Panc1 (cell line): ENCODE measurements at regions of chr1 and their contacts with region 1.

Region 1: DNA sequence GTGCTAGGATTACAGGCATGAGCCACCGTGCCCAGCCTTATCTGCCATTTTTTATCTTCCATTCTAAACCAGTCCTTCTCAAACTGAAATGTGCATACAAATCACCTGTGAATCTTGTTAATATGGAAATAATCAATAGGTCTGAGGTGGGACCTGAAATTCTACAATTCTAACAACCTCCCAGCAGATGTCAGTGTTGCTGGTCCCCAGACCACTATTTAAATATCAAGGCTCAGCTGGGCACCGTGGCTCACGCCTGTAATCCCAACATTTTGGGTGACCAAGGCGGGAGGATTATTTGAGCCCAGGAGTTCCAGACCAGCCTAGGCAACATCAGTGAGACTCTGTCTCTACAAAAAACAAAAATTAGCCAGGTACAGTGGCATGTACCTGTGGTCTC is 4.1 kb downstream of the UQCRHL start:
- DNase-seq: no peak
- ATAC-seq: no peak
- H3K4me3 ChIP-seq: no peak overlapping the region
- H3K27ac ChIP-seq: peak overlapping the region; percentile 99
- H3K4me1 ChIP-seq: peaks cover 50% of the 10 kb centered on the region
- H3K27me3 ChIP-seq: no peaks in the 10 kb centered on the region
- CTCF ChIP-seq: no peak

Region 2: GRCh38 chr1:15749399-15750291 is 53.7 kb before region 1 on chr1:
- CTCF ChIA-PET with region 1: no interaction called
- POLR2A ChIA-PET with region 1: no interaction called
- in situ Hi-C with region 1: no loop called
- intact Hi-C with region 1: no loop called
- DNase-seq: no peak
- ATAC-seq: no peak
- H3K4me3 ChIP-seq: no peak overlapping the region
- H3K27ac ChIP-seq: peak overlapping the region; percentile 3; the same call in 1 of the 2 replicates
- H3K4me1 ChIP-seq: peaks cover 15% of the 10 kb centered on the region
- H3K27me3 ChIP-seq: no peaks in the 10 kb centered on the region
- CTCF ChIP-seq: no peak

Region 3: DNA sequence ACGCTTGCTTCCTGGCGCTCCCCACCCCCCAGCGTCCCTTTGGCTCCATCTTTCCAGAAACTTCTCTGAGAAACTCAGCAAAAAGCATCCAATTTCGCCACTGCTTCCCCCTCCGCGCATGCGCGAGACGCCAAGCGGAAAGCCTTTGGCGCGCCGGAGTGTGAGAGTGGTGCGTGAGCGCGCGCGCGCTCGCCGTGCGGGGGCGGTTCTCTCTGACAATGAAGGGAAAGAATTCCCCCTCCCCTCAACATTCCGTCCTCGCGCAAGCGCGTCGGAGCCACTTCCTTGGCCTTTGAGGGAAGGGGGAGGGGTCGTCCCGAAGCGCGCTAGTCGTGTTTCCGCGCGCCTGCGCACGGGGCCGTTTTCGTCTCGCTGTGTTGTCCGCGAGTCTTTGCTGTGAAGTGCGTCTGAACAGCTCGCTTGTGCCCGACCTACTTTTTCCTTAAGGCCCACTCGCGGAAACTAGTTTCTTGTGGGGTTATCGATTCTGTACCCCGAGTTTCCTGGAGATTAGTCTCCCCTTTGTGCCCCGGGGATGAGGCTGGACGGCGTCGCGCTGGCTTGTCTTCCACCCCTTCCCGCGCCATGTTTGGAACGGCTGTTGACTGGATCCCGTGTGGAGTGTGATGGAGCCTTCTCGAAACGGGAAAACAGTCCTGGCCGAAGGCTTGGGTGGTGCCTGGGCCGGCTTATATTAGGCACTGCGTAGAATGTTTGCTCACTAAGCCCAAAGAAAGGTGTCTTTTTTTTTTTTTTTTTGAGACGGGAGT is 32.6 kb after region 1 on chr1:
- CTCF ChIA-PET with region 1: interaction called, 8 read pairs
- POLR2A ChIA-PET with region 1: interaction called, 23 read pairs
- in situ Hi-C with region 1: no loop called
- intact Hi-C with region 1: no loop called
- DNase-seq: peak; percentile 98
- ATAC-seq: peak; percentile 73
- H3K4me3 ChIP-seq: peak overlapping the region; percentile 65 to 91
- H3K27ac ChIP-seq: peak overlapping the region; percentile 95
- H3K4me1 ChIP-seq: peaks cover 24% of the 10 kb centered on the region
- H3K27me3 ChIP-seq: no peaks in the 10 kb centered on the region
- CTCF ChIP-seq: no peak

Region 4: GRCh38 chr1:15885701-15886610 is 82.6 kb after region 1 on chr1:
- CTCF ChIA-PET with region 1: interaction called, 12 read pairs
- POLR2A ChIA-PET with region 1: interaction called, 8 read pairs
- in situ Hi-C with region 1: no loop called
- intact Hi-C with region 1: no loop called
- DNase-seq: peak; percentile 55
- ATAC-seq: peak; percentile 96
- H3K4me3 ChIP-seq: peak overlapping the region; percentile 21 to 57
- H3K27ac ChIP-seq: peak overlapping the region; percentile 64
- H3K4me1 ChIP-seq: peaks cover 32% of the 10 kb centered on the region
- H3K27me3 ChIP-seq: no peaks in the 10 kb centered on the region
- CTCF ChIP-seq: no peak

Region 5: GRCh38 chr1:15918962-15919715 is 115.8 kb after region 1 on chr1:
- CTCF ChIA-PET with region 1: no interaction called
- POLR2A ChIA-PET with region 1: no interaction called
- in situ Hi-C with region 1: no loop called
- intact Hi-C with region 1: loop called (anchors 10 kb)
- DNase-seq: no peak
- ATAC-seq: no peak
- H3K4me3 ChIP-seq: no peak overlapping the region
- H3K27ac ChIP-seq: no peak overlapping the region
- H3K4me1 ChIP-seq: no peaks in the 10 kb centered on the region
- H3K27me3 ChIP-seq: no peaks in the 10 kb centered on the region
- CTCF ChIP-seq: no peak

Region 6: DNA sequence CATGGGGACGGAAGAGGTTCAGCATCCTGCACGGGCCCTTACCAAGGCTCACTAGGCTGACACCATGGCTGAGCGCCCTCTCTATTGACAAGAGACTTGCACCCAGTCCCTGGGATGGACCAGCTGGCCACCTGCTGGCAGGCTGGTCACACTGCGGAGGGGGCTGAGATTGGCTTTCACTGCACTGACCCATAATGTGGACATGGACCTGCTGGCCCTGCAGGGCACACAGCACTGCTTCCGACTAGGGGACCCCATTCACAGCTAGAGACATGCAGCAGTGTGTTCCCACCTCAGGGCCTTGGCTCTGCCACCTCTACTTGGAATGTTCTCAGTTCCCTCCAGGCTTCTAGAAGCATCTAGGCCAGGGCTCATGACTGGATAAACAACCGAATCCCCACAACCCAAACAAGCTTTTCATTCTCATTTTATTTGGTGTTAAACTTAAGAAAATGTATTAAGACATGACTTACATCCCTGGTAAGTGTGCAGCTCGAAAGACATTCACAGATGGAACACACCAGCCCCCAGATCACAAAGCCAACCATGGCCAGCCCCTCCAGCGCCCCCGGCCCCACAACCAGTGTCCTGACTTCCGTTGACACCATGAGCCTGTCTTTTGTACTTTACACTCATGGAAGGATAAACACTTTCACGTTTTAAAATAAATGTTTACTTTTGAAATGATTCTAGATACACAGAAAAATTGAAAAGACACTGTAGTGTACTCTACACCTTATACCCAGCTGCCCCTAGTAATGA is 191.4 kb after region 1 on chr1:
- CTCF ChIA-PET with region 1: no interaction called
- POLR2A ChIA-PET with region 1: no interaction called
- in situ Hi-C with region 1: no loop called
- intact Hi-C with region 1: loop called (anchors 10 kb)
- DNase-seq: no peak
- ATAC-seq: peak; percentile 92
- H3K4me3 ChIP-seq: no peak overlapping the region
- H3K27ac ChIP-seq: no peak overlapping the region
- H3K4me1 ChIP-seq: no peaks in the 10 kb centered on the region
- H3K27me3 ChIP-seq: no peaks in the 10 kb centered on the region
- CTCF ChIP-seq: peak; percentile 90